HEK293 (cell line): ENCODE measurements at regions of chr6 and their contacts with region 1.

Region 1: GRCh38 chr6:9732056-9732455 is 682.8 kb downstream of the TFAP2A start:
- H3K4me3 ChIP-seq: no peak overlapping the region
- H3K27ac ChIP-seq: no peak overlapping the region
- H3K4me1 ChIP-seq: no peaks in the 10 kb centered on the region
- CTCF ChIP-seq: no peak

Region 2: DNA sequence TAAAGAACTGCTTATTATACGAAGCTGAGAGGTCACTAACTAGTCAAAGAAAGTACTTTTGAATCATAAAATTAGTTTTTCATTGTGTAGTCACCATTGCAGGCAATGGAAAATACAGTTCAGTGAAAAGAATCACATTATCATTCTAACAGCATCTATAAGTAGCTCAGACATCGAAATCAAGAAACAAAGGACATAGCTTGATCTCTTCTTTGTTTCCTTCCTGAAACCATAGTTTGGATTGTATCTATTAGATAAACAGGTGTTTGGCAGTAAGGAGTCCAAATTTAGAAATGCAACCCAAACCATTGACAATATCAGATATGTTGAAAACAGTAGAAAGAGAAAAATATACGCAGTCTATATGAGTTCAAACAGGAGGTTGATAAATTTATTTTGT is 14.5 kb before region 1 on chr6:
- CTCF ChIA-PET with region 1: no interaction called
- POLR2A ChIA-PET with region 1: no interaction called
- H3K4me3 ChIP-seq: no peak overlapping the region
- H3K27ac ChIP-seq: no peak overlapping the region
- H3K4me1 ChIP-seq: no peaks in the 10 kb centered on the region
- CTCF ChIP-seq: no peak

Region 3: GRCh38 chr6:9986273-9986672 is 254.2 kb after region 1 on chr6:
- CTCF ChIA-PET with region 1: interaction called, 11 read pairs
- POLR2A ChIA-PET with region 1: no interaction called
- H3K4me3 ChIP-seq: no peak overlapping the region
- H3K27ac ChIP-seq: no peak overlapping the region
- H3K4me1 ChIP-seq: no peaks in the 10 kb centered on the region
- CTCF ChIP-seq: no peak